ENCODE measurements at regions of chr14 and their contacts with region 1.

Region 1: DNA sequence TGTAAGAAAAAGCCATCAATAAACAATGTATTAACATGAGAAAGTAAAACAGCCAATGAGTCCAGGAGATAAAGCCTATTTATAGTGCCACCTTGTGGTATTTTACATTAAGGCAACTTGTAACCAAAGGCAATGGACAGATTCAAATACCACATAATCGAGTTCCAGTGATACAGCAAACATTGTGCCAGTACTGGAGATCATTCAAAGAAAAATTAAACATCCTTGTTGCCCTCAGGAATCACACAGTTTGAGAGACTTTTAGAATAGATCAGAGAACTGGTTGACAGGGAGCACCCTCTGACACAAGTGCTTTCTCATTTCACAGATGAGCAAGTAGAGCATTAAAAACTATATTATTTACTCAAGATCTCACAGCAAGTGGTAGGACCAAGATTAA is 98.1 kb downstream of the DDHD1 start:
- DNase-seq: no peak
- H3K4me3 ChIP-seq: no peak overlapping the region
- H3K27ac ChIP-seq: peak overlapping the region; percentile 22 to 52 (median 38)
- H3K4me1 ChIP-seq: peaks cover 0 to 41% (median 40%) of the 10 kb centered on the region in 4 donors
- H3K27me3 ChIP-seq: no peaks in the 10 kb centered on the region
- CTCF ChIP-seq: peak; percentile 66 to 82 (median 75)
- EP300 ChIP-seq: no peak
- POLR2A ChIP-seq: no peak

Region 2: DNA sequence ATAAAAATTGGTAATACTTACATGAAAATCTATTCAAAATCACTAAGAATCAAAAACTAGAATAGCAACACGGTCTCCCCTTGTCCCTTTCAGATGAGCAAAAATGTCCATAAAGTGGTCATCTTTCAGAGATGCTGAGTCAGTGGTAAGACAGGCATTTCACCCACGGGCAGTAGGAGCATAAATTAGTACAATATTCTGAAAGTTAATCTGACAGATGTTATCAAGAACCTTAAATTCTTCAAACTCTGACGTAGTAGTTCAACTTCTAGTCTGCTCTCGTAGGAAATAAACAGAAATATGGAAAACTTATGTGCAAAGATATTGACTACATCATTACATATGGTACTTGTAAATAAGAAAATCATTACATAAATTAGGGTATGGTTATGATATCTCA is 230.5 kb before region 1 on chr14:
- intact Hi-C with region 1: loop called (anchors 2 kb)
- DNase-seq: no peak
- H3K4me3 ChIP-seq: no peak overlapping the region
- H3K27ac ChIP-seq: no peak overlapping the region
- H3K4me1 ChIP-seq: peaks cover 0 to 25% (median 6%) of the 10 kb centered on the region in 4 donors
- H3K27me3 ChIP-seq: no peaks in the 10 kb centered on the region
- CTCF ChIP-seq: no peak
- EP300 ChIP-seq: no peak
- POLR2A ChIP-seq: no peak

Region 3: GRCh38 chr14:52961060-52961639 is 93.9 kb before region 1 on chr14:
- intact Hi-C with region 1: loop called (anchors 5 kb)
- DNase-seq: no peak
- H3K4me3 ChIP-seq: no peak overlapping the region
- H3K27ac ChIP-seq: peak overlapping the region; percentile 53 to 68 (median 64)
- H3K4me1 ChIP-seq: peaks cover 8 to 22% (median 19%) of the 10 kb centered on the region in 4 donors
- H3K27me3 ChIP-seq: no peaks in the 10 kb centered on the region
- CTCF ChIP-seq: peak; percentile 61 to 80 (median 77)
- EP300 ChIP-seq: no peak
- POLR2A ChIP-seq: no peak

Region 4: GRCh38 chr14:52998376-52999015 is 56.5 kb before region 1 on chr14:
- intact Hi-C with region 1: loop called (anchors 5 kb)
- DNase-seq: no peak
- H3K4me3 ChIP-seq: peak overlapping the region in 1 of 4 donors; percentile 11
- H3K27ac ChIP-seq: peak overlapping the region; percentile 57 to 78 (median 74)
- H3K4me1 ChIP-seq: peaks cover 6 to 30% (median 27%) of the 10 kb centered on the region in 4 donors
- H3K27me3 ChIP-seq: no peaks in the 10 kb centered on the region
- CTCF ChIP-seq: no peak
- EP300 ChIP-seq: no peak
- POLR2A ChIP-seq: no peak

Region 5: DNA sequence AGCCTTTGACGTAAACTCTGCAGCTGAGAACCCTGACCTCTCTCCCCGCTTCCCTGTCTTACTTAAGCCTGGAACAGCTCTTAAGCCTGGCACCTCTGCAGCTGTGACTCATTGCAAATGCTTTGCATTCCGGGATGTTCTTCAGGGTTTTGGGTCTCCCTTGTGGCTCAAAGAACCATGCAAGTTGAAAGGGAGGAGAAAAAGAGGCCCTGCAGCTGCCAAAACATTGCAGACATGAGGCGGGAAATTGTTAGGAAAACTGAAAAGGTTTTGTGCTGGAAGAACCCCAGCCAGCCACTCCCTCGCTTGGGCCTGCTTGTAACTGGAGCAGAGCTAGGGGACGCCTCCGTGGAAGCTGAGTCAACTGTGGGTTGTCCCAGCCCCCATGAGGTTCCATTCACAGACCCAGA is 43.9 kb before region 1 on chr14:
- intact Hi-C with region 1: loop called (anchors 5 kb)
- DNase-seq: peak; percentile 95
- H3K4me3 ChIP-seq: no peak overlapping the region
- H3K27ac ChIP-seq: peak overlapping the region; percentile 68 to 78 (median 72)
- H3K4me1 ChIP-seq: peaks cover 7 to 22% (median 20%) of the 10 kb centered on the region in 4 donors
- H3K27me3 ChIP-seq: no peaks in the 10 kb centered on the region
- CTCF ChIP-seq: no peak
- EP300 ChIP-seq: peak; percentile 6
- POLR2A ChIP-seq: no peak

Region 6: DNA sequence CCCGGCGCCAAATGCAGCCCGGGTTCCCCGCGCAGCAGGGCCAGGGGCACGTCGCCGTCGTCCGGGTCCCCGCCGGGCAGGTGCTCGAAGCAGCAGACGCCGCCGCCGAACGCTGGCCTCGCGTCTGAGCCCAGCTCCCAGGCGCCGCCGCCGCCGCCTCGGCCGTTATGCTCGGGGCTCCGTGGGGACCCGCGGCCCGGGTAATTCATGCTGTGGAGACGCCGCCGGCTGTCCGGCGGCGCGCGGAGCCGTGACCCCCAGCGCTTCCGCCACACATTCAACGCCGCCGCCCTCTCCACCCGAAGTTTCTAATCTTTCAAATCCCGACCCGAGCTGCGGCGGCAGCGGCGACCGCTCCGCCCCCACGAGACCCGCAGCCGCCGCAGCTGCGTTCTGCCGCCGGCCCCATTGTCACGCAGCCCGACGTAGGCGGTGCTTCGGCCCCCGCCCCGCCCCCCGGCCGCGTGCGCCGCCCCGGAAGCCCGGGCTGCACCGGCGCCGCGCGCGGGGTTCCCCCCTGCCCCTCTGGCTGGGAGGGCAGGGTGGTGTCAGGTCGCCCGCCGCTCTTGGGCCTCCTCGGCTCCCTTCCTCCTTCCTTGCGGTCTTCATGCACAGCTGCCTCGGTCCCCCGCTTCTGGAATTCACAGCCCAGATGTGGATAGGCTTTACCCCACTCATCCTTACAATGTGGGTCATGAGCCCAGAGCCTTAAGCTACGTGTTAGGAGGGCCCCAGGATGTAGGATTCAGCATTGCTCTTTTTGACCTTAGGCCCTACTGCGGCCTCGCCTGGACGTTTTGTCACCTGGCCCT is 98.1 kb after region 1 on chr14 and contains the start of gene DDHD1:
- intact Hi-C with region 1: loop called (anchors 5 kb)
- DNase-seq: peak; percentile 93
- H3K4me3 ChIP-seq: peak within 1 kb of the TSS; percentile 76 to 93 (median 91)
- H3K27ac ChIP-seq: peak within 1 kb of the TSS; percentile 89 to 97 (median 93)
- H3K4me1 ChIP-seq: peaks cover 9 to 32% (median 28%) of the 10 kb centered on the region in 4 donors
- H3K27me3 ChIP-seq: no peaks in the 10 kb centered on the region
- CTCF ChIP-seq: no peak
- EP300 ChIP-seq: no peak
- POLR2A ChIP-seq: no peak
- total RNA-seq, gene DDHD1: 15.4 to 19.9 (median 16.2) TPM

Region 7: DNA sequence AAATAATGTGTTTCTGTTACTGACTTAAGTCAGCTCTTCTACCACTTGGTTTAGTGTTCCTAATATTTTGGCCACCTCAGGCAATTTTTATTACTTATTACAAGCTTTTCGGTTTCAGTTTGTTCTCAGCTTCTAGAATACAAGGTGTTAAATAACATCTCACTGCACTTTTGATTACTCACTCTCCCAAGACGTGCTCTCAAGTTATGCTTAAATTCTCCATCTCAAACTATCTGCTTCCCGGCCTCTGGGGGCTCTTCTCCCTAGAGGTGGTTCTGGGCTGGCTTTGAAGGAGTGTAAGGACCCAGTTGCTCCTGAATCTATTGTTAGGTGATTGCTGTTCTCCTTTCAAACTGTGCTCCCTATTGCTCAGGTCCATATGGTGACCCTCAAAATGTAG is 292.0 kb after region 1 on chr14:
- intact Hi-C with region 1: no loop called
- DNase-seq: no peak
- H3K4me3 ChIP-seq: no peak overlapping the region
- H3K27ac ChIP-seq: no peak overlapping the region
- H3K4me1 ChIP-seq: no peaks in the 10 kb centered on the region
- H3K27me3 ChIP-seq: no peaks in the 10 kb centered on the region
- CTCF ChIP-seq: no peak
- EP300 ChIP-seq: no peak
- POLR2A ChIP-seq: no peak